Activated CD4-positive, alpha-beta memory T cell treated with anti-CD3 and anti-CD28 coated beads, Interleukin-2, amount 10 ng/mL, durations not matched to agents 7 days and 5 days (primary cell): ENCODE measurements at regions of chr19 and their contacts with region 1.

Region 1: GRCh38 chr19:50357178-50358100 is 8.0 kb downstream of the NAPSA start:
- DNase-seq: peak; percentile 89
- H3K4me3 Mint-ChIP-seq: peak overlapping the region; percentile 86
- H3K27ac Mint-ChIP-seq: peak overlapping the region; percentile 94
- H3K4me1 Mint-ChIP-seq: peaks cover 44% of the 10 kb centered on the region
- H3K27me3 Mint-ChIP-seq: no peaks in the 10 kb centered on the region

Region 2: GRCh38 chr19:50329146-50329925 is 28.1 kb before region 1 on chr19 and contains the start of gene KCNC3:
- CTCF ChIA-PET with region 1: interaction called, 7 read pairs
- POLR2A ChIA-PET with region 1: interaction called, 21 read pairs
- DNase-seq: peak; percentile 99
- H3K4me3 Mint-ChIP-seq: peak within 1 kb of the TSS; percentile 87
- H3K27ac Mint-ChIP-seq: peak within 1 kb of the TSS; percentile 95
- H3K4me1 Mint-ChIP-seq: peaks cover 73% of the 10 kb centered on the region
- H3K27me3 Mint-ChIP-seq: peaks cover 30% of the 10 kb centered on the region
- total RNA-seq, gene KCNC3: 4.2 to 4.3 TPM

Region 3: DNA sequence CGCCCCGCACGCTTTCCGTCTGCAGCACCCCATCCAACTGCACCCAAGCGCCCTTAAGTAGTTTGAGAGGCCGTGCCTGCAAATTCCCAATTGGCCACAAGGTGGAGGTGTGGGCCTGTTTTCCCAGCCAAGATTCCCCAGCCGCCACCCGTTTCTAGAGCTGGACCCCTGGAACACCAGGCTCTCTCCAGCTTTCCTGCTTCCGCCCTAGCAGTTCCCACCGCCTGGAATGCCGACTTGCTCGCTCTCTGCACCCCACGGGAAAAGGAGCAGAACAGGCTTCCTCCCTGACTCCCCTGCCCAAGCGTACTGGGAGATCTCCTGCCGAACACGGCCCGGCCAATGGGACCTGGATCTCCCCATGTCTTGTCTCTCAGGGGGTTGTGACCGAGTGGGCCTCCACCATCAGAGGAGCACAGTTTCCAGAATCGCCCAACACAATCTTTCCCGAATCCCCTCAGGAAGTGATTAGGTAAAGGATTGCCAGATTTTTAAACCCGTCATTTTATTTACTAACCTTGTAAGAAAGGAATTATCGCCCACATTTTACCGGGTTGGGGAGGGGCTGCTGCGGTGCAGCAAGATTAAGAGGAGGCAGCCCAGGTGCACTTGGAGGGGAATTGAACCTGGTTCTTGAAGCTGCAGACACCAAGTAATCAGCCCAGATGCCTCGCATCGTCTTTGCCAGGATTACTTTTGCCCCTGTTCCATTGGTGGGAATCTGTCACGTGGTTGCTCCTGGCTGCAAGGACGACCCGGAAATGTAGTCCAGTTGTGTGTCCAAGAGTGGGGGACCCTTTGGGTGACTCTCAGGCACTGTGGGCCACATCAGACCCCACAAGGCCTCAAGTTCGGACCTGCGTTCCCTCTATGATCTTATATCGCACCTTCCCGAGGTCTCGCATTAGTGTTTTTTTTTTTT is 11.5 kb after region 1 on chr19:
- CTCF ChIA-PET with region 1: interaction called, 21 read pairs
- POLR2A ChIA-PET with region 1: interaction called, 13 read pairs
- DNase-seq: peak; percentile 83
- H3K4me3 Mint-ChIP-seq: peak overlapping the region; percentile 94
- H3K27ac Mint-ChIP-seq: peak overlapping the region; percentile 90
- H3K4me1 Mint-ChIP-seq: peaks cover 42% of the 10 kb centered on the region
- H3K27me3 Mint-ChIP-seq: no peaks in the 10 kb centered on the region

Region 4: DNA sequence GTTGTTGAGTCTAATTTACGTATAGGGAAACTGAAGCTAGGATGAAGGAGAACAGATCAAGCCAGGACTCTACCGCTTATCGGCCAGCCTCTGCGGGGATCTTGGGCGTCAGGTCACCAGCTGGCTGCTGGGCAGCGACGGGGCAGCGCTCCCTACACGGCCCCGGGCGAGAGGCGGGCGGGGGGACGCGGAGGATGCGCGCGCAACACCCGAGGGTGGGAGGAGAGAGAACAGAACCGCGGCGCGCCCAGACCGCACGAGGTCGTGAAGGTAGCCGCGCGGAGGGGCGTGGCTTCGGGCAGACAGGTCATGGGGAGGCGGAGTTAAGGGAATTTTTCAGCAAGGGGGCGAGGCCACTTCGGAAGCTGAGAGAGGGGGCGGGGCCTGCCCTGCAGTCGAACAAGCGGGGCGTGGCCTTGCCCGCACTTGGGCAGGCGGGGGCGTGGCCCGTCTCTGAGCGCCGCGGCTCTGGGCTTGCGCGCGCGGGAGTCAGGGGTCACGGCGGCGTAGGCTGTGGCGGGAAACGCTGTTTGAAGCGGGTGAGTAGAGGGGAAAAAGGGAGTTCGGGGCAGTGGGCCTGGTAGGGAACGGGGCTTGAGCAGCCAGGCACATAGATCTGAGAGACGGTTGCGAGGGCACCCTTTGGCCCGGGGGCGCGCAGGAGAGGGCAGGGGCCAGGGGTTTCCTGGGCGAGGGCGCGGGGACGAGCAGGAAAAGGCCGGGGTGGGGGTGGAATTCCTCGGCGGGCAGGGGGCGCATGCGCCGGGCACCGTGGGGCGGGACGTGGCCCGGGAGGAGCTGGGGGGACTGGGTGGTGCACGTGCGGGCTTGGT is 26.6 kb after region 1 on chr19 and contains the start of gene POLD1:
- CTCF ChIA-PET with region 1: interaction called, 14 read pairs
- POLR2A ChIA-PET with region 1: interaction called, 30 read pairs
- DNase-seq: peak; percentile 99
- H3K4me3 Mint-ChIP-seq: peak within 1 kb of the TSS; percentile 98
- H3K27ac Mint-ChIP-seq: peak within 1 kb of the TSS; percentile 89
- H3K4me1 Mint-ChIP-seq: peaks cover 45% of the 10 kb centered on the region
- H3K27me3 Mint-ChIP-seq: no peaks in the 10 kb centered on the region
- total RNA-seq, gene POLD1: 117 to 119 TPM

Region 5: GRCh38 chr19:50449236-50449899 is 91.9 kb after region 1 on chr19:
- CTCF ChIA-PET with region 1: no interaction called
- POLR2A ChIA-PET with region 1: no interaction called
- DNase-seq: no peak
- H3K4me3 Mint-ChIP-seq: no peak overlapping the region
- H3K27ac Mint-ChIP-seq: no peak overlapping the region
- H3K4me1 Mint-ChIP-seq: no peaks in the 10 kb centered on the region
- H3K27me3 Mint-ChIP-seq: peaks cover 2% of the 10 kb centered on the region

Region 6: GRCh38 chr19:50556282-50557008 is 199.0 kb after region 1 on chr19:
- CTCF ChIA-PET with region 1: interaction called, 18 read pairs
- POLR2A ChIA-PET with region 1: interaction called, 8 read pairs
- DNase-seq: peak; percentile 81
- H3K4me3 Mint-ChIP-seq: peak overlapping the region; percentile 80
- H3K27ac Mint-ChIP-seq: no peak overlapping the region
- H3K4me1 Mint-ChIP-seq: peaks cover 10% of the 10 kb centered on the region
- H3K27me3 Mint-ChIP-seq: peaks cover 38% of the 10 kb centered on the region